ENCODE measurements at regions of chr2 and their contacts with region 1.

Region 1: GRCh38 chr2:237744613-237745249 is 53.8 kb upstream of the RBM44 start:
- DNase-seq: peak; percentile 92
- H3K4me3 ChIP-seq: no peak overlapping the region; a peak in 1 of 4 replicates
- H3K27ac ChIP-seq: peak overlapping the region in 1 of 2 experiments; percentile 16; a peak in 1 of 4 replicates
- H3K4me1 ChIP-seq: peaks cover 3 to 10% of the 10 kb centered on the region in 2 experiments; a peak in 2 of 4 replicates
- H3K27me3 ChIP-seq: no peaks in the 10 kb centered on the region
- CTCF ChIP-seq: peak; percentile 98
- EP300 ChIP-seq: no peak
- RAD21 ChIP-seq: peak; percentile 99

Region 2: DNA sequence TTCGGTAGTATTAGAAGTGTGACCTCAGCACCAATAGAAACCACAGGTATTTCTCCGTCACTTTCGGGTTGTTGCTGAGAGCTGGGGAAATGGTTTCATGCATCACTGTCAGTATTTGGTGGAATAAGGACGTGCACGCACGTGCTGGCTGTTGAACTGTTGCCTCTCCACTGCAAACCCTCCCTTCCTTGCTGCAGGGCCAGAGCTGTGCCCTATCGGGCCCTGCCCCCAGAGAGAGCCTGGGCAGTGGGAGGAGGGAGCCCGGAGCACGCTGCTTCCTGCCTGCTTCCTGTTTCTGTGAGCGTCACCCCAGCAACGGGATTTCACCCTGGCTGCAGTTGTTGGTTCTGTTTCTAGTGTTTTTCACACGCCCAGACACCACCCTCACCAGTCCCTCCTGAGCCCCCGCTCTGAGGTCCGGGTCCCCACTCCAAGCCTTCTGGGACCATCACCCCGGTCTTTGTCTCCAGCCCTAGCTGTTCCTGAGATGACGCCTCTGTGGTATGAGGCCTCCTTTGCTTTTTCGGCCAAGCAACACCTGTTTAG is 69.9 kb before region 1 on chr2:
- CTCF ChIA-PET with region 1: interaction called, 211 read pairs
- POLR2A ChIA-PET with region 1: interaction called, 3 read pairs
- DNase-seq: peak; percentile 90
- H3K4me3 ChIP-seq: no peak overlapping the region; a peak in 1 of 4 replicates
- H3K27ac ChIP-seq: peak overlapping the region; percentile 76 to 92
- H3K4me1 ChIP-seq: peaks cover 35 to 51% of the 10 kb centered on the region in 2 experiments
- H3K27me3 ChIP-seq: no peaks in the 10 kb centered on the region
- CTCF ChIP-seq: no peak
- EP300 ChIP-seq: no peak
- RAD21 ChIP-seq: peak; percentile 36; the same call in 1 of the 2 replicates

Region 3: DNA sequence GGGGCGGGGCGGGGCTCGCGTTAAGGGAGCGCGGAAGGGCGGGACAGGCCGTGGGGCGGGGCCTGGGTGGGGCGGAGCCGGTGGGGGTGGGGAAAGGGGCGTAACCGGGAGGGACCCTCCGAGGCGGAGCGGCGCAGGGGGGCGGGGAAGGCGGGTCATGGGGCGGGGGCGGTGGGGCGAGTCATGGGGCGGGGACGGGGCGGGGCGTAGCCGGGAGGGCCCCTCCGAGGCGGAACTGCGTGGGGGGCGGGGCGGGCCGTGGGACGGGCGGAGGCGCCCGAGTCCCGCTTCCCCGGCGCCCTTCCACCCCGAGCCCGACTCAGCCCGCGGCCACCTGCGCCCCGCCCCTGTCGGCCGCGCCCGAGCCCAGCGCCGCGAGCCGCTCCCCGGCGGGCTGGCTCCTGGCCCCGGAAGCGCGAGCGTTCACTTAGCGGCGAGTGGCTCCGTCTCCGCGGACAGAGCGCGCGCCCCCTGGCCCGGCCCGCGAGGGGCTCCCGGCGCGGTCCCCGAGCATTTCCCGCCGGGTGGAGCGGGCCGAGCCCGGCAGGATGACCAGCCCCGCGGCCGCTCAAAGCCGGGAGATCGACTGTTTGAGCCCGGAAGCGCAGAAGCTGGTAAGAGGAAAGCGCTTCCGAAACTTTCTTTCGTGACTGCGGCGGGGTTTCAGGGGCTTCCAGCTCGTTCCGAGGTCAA is 52.7 kb before region 1 on chr2:
- CTCF ChIA-PET with region 1: interaction called, 68 read pairs
- POLR2A ChIA-PET with region 1: no interaction called
- DNase-seq: peak; percentile 99
- H3K4me3 ChIP-seq: peak overlapping the region; percentile 82 to 84
- H3K27ac ChIP-seq: peak overlapping the region; percentile 60 to 88
- H3K4me1 ChIP-seq: peaks cover 50 to 53% of the 10 kb centered on the region in 2 experiments
- H3K27me3 ChIP-seq: no peaks in the 10 kb centered on the region
- CTCF ChIP-seq: no peak
- EP300 ChIP-seq: no peak
- RAD21 ChIP-seq: no peak

Region 4: GRCh38 chr2:237717366-237718276 is 27.1 kb before region 1 on chr2:
- CTCF ChIA-PET with region 1: interaction called, 16 read pairs
- POLR2A ChIA-PET with region 1: no interaction called
- DNase-seq: peak; percentile 74
- H3K4me3 ChIP-seq: no peak overlapping the region; a peak in 1 of 4 replicates
- H3K27ac ChIP-seq: peak overlapping the region; percentile 14 to 94; a peak in 3 of 4 replicates
- H3K4me1 ChIP-seq: peaks cover 35 to 49% of the 10 kb centered on the region in 2 experiments
- H3K27me3 ChIP-seq: no peaks in the 10 kb centered on the region
- CTCF ChIP-seq: no peak
- EP300 ChIP-seq: peak in 1 of 2 experiments; percentile 76; a peak in 1 of 4 replicates
- RAD21 ChIP-seq: no peak

Region 5: GRCh38 chr2:237774802-237775553 is 30.2 kb after region 1 on chr2:
- CTCF ChIA-PET with region 1: interaction called, 18 read pairs
- POLR2A ChIA-PET with region 1: no interaction called
- DNase-seq: peak; percentile 75
- H3K4me3 ChIP-seq: no peak overlapping the region; a peak in 1 of 4 replicates
- H3K27ac ChIP-seq: no peak overlapping the region; a peak in 1 of 4 replicates
- H3K4me1 ChIP-seq: no peaks in the 10 kb centered on the region; a peak in 1 of 4 replicates
- H3K27me3 ChIP-seq: no peaks in the 10 kb centered on the region
- CTCF ChIP-seq: peak; percentile 70
- EP300 ChIP-seq: no peak
- RAD21 ChIP-seq: peak; percentile 67